ENCODE measurements at regions of chr12 and their contacts with region 1.

Region 1: GRCh38 chr12:57756406-57757341 is 1.8 kb downstream of the MARCHF9 start:
- DNase-seq: peak; percentile 85
- ATAC-seq: peak; percentile 64
- H3K4me3 Mint-ChIP-seq: peak overlapping the region; percentile 72
- H3K27ac Mint-ChIP-seq: no peak overlapping the region
- H3K4me1 Mint-ChIP-seq: peaks cover 34% of the 10 kb centered on the region
- H3K27me3 Mint-ChIP-seq: peaks cover 84% of the 10 kb centered on the region
- CTCF ChIP-seq: peak; percentile 78

Region 2: GRCh38 chr12:57657744-57658143 is 98.9 kb before region 1 on chr12:
- CTCF ChIA-PET with region 1: no interaction called
- POLR2A ChIA-PET with region 1: no interaction called
- DNase-seq: no peak
- ATAC-seq: no peak
- H3K4me3 Mint-ChIP-seq: no peak overlapping the region
- H3K27ac Mint-ChIP-seq: no peak overlapping the region
- H3K4me1 Mint-ChIP-seq: no peaks in the 10 kb centered on the region
- H3K27me3 Mint-ChIP-seq: peaks cover 53% of the 10 kb centered on the region
- CTCF ChIP-seq: no peak

Region 3: GRCh38 chr12:57744777-57745484 is 11.7 kb before region 1 on chr12 and contains the start of gene TSPAN31:
- CTCF ChIA-PET with region 1: interaction called, 34 read pairs
- POLR2A ChIA-PET with region 1: interaction called, 4 read pairs
- DNase-seq: peak; percentile 93
- ATAC-seq: peak; percentile 86
- H3K4me3 Mint-ChIP-seq: peak within 1 kb of the TSS; percentile 93
- H3K27ac Mint-ChIP-seq: peak within 1 kb of the TSS; percentile 98
- H3K4me1 Mint-ChIP-seq: peaks cover 14% of the 10 kb centered on the region
- H3K27me3 Mint-ChIP-seq: peaks cover 46% of the 10 kb centered on the region
- CTCF ChIP-seq: no peak
- total RNA-seq, gene TSPAN31: 9.9 to 18.6 TPM (median 18.4 TPM) in 3 replicates

Region 4: GRCh38 chr12:57771708-57772428 is 15.2 kb after region 1 on chr12 and contains the start of gene METTL1:
- CTCF ChIA-PET with region 1: interaction called, 80 read pairs
- POLR2A ChIA-PET with region 1: interaction called, 6 read pairs
- DNase-seq: peak; percentile 97
- ATAC-seq: peak; percentile 89
- H3K4me3 Mint-ChIP-seq: peak within 1 kb of the TSS; percentile 97
- H3K27ac Mint-ChIP-seq: peak within 1 kb of the TSS; percentile 100
- H3K4me1 Mint-ChIP-seq: peaks cover 11% of the 10 kb centered on the region
- H3K27me3 Mint-ChIP-seq: peaks cover 31% of the 10 kb centered on the region
- CTCF ChIP-seq: no peak
- total RNA-seq, gene METTL1: 25.5 to 31.7 TPM (median 28.6 TPM) in 3 replicates

Region 5: GRCh38 chr12:57782608-57783465 is 26.2 kb after region 1 on chr12 and contains the start of gene TSFM:
- CTCF ChIA-PET with region 1: interaction called, 13 read pairs
- POLR2A ChIA-PET with region 1: no interaction called
- DNase-seq: peak; percentile 96
- ATAC-seq: peak; percentile 91
- H3K4me3 Mint-ChIP-seq: peak within 1 kb of the TSS; percentile 100
- H3K27ac Mint-ChIP-seq: peak within 1 kb of the TSS; percentile 97
- H3K4me1 Mint-ChIP-seq: peaks cover 4% of the 10 kb centered on the region; the same call in 1 of the 2 replicates
- H3K27me3 Mint-ChIP-seq: no peaks in the 10 kb centered on the region
- CTCF ChIP-seq: peak; percentile 77
- total RNA-seq, gene TSFM: 48.6 to 49.5 TPM (median 48.7 TPM) in 3 replicates

Region 6: GRCh38 chr12:57825451-57825850 is 68.8 kb after region 1 on chr12:
- CTCF ChIA-PET with region 1: no interaction called
- POLR2A ChIA-PET with region 1: no interaction called
- DNase-seq: no peak
- ATAC-seq: no peak
- H3K4me3 Mint-ChIP-seq: no peak overlapping the region
- H3K27ac Mint-ChIP-seq: no peak overlapping the region
- H3K4me1 Mint-ChIP-seq: peaks cover 2% of the 10 kb centered on the region; the same call in 1 of the 2 replicates
- H3K27me3 Mint-ChIP-seq: no peaks in the 10 kb centered on the region
- CTCF ChIP-seq: no peak

Measured in WTC11 (cell line).